ENCODE measurements at regions of chr5 and their contacts with region 1.

Region 1: DNA sequence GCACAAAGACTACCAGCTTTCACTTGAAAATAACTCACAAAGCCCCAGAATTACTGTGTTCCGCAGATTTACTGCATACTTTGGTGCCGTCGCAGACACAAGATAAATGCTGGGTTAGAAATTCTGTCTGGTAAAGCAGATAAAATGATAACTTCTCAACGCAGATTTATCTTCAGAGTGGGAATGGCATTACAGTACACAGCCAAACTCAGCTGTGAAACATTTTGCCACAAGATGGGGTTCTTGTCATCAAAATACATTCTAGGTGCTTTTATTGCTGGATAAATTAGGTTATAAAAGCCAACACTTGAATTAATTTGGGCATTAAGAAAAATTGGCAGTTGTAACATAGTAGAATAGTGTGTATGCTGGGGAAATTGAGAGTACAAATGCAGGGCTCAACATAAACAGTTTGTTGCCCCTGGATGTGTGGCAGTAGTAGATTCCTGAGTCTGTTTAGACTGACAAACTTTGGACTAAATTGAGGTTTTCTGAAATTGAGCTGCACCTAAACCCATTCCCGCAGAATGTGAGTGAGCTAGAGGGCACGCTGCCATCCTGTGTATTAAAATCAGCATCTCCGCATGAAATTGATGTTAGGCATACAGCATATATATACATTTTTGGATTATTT is 61.1 kb downstream of the LMNB1 start:
- DNase-seq: no peak
- H3K4me3 ChIP-seq: no peak overlapping the region
- CTCF ChIP-seq: peak; percentile 39

Region 2: GRCh38 chr5:126676195-126676624 is 161.8 kb before region 1 on chr5:
- CTCF ChIA-PET with region 1: no interaction called
- POLR2A ChIA-PET with region 1: no interaction called
- DNase-seq: no peak
- H3K4me3 ChIP-seq: no peak overlapping the region
- CTCF ChIP-seq: peak; percentile 67

Region 3: GRCh38 chr5:126826619-126827215 is 11.3 kb before region 1 on chr5:
- CTCF ChIA-PET with region 1: interaction called, 13 read pairs
- POLR2A ChIA-PET with region 1: no interaction called
- DNase-seq: no peak
- H3K4me3 ChIP-seq: no peak overlapping the region
- CTCF ChIP-seq: no peak

Region 4: GRCh38 chr5:126988021-126988569 is 150.1 kb after region 1 on chr5:
- CTCF ChIA-PET with region 1: no interaction called
- POLR2A ChIA-PET with region 1: no interaction called
- DNase-seq: no peak
- H3K4me3 ChIP-seq: no peak overlapping the region
- CTCF ChIP-seq: no peak

Region 5: GRCh38 chr5:127313847-127314473 is 475.9 kb after region 1 on chr5:
- CTCF ChIA-PET with region 1: interaction called, 57 read pairs
- POLR2A ChIA-PET with region 1: no interaction called
- DNase-seq: no peak
- H3K4me3 ChIP-seq: no peak overlapping the region
- CTCF ChIP-seq: peak; percentile 88

Region 6: DNA sequence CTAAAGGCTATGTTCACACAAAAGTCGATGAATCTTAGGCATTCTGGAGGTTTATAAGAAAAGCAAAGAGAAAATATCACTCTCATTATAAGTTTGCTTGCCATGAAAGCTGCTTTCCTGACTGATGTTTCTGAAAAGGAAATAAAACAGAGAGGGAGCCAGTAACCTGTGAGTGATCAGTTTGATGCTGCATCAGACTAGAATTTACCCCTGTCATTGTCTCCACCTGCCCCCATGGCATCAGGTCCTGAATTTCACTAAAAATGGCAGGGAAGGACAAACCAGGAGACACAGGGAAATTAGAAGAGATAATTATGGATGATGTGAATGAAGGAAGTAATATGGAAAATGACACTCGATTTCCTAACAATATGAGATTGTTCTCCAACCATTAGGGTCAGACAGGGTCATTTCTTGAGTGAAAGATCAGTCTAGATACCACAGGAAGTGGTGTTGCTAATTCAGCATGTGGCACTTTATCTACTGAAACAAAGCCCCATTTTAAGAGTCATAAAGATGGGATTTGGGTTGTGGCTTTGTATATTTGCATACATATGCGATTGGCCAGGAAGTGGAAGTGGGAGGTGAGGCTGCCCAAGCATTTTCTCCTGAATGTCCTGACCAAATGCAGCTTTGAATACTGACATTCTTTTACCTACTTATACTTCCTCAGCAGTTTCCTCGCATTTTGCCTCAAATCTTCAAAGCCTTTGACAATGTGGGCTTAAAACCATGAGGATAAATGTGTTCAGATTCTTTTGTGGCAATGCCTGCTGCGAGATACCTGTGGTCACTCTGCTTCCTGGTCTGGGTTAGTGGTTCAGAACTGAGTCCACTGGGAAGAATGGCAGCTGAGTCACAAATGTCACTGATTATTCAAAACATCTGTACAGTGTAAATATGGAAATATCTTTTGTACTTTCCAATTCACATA is 482.3 kb after region 1 on chr5:
- CTCF ChIA-PET with region 1: interaction called, 57 read pairs
- POLR2A ChIA-PET with region 1: no interaction called
- DNase-seq: no peak
- H3K4me3 ChIP-seq: no peak overlapping the region
- CTCF ChIP-seq: no peak